Thyroid gland (tissue), 4 donors: ENCODE measurements at regions of chr2 and their contacts with region 1.

Region 1: GRCh38 chr2:70616168-70616694 is 62.6 kb upstream of the TGFA start:
- DNase-seq: peak; percentile 54 to 56
- H3K4me3 ChIP-seq: no peak overlapping the region
- H3K27ac ChIP-seq: no peak overlapping the region
- H3K4me1 ChIP-seq: peaks cover 11 to 17% of the 10 kb centered on the region in 2 donors
- H3K27me3 ChIP-seq: no peaks in the 10 kb centered on the region
- CTCF ChIP-seq: no peak
- POLR2A ChIP-seq: no peak

Region 2: GRCh38 chr2:70340921-70341765 is 275.1 kb before region 1 on chr2:
- intact Hi-C with region 1: loop called (anchors 5 kb)
- DNase-seq: peak; percentile 26 to 38
- H3K4me3 ChIP-seq: no peak overlapping the region
- H3K27ac ChIP-seq: no peak overlapping the region
- H3K4me1 ChIP-seq: no peaks in the 10 kb centered on the region
- H3K27me3 ChIP-seq: no peaks in the 10 kb centered on the region
- CTCF ChIP-seq: peak; percentile 63 to 96 (median 79)
- POLR2A ChIP-seq: no peak

Region 3: DNA sequence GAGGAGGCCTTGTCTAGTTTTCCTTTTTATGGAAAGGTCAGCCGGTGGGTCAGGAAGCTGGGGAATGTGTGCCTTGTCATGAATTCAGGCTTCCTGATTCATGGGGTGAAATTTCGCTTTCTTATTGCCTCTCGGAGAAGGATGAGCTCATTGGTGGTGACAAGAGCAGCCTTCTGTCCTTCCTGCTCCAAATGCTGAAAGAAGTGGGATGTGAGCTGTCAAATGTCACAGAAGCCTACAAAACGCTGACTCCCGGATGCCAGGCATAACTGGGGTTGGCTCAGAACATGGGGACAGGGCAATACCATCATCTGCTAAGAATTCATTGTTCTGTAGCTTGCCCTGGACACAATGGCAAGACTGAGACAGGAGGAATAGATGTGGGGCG is 258.6 kb before region 1 on chr2:
- intact Hi-C with region 1: no loop called
- DNase-seq: no peak
- H3K4me3 ChIP-seq: no peak overlapping the region
- H3K27ac ChIP-seq: no peak overlapping the region
- H3K4me1 ChIP-seq: no peaks in the 10 kb centered on the region
- H3K27me3 ChIP-seq: no peaks in the 10 kb centered on the region
- CTCF ChIP-seq: no peak
- POLR2A ChIP-seq: no peak

Region 4: GRCh38 chr2:70553584-70554337 is 62.5 kb before region 1 on chr2 and contains the start of gene TGFA:
- intact Hi-C with region 1: loop called (anchors 5 kb)
- DNase-seq: peak; percentile 92
- H3K4me3 ChIP-seq: peak within 1 kb of the TSS; percentile 1 to 92 (median 54)
- H3K27ac ChIP-seq: peak within 1 kb of the TSS; percentile 85 to 92 (median 88)
- H3K4me1 ChIP-seq: peaks cover 6 to 19% of the 10 kb centered on the region in 2 donors
- H3K27me3 ChIP-seq: no peaks in the 10 kb centered on the region
- CTCF ChIP-seq: peak; percentile 14 to 91 (median 82)
- POLR2A ChIP-seq: peak in 1 of 2 donors; percentile 85
- total RNA-seq, gene TGFA: 12.9 to 23.0 (median 18.6) TPM